H1 (cell line): ENCODE measurements at regions of chr19 and their contacts with region 1.

Region 1: GRCh38 chr19:7106711-7107685 is 37.5 kb downstream of the ZNF557 start:
- DNase-seq: no peak
- H3K4me3 ChIP-seq: no peak overlapping the region
- H3K27ac ChIP-seq: no peak overlapping the region
- H3K4me1 ChIP-seq: peaks cover 0 to 5% (median 0%) of the 10 kb centered on the region in 4 experiments; a peak in 4 of 7 replicates
- H3K27me3 ChIP-seq: 0 out of 7 replicates have a peak, but pooled peaks cover 0 to 2% (median 0%) of the 10 kb centered on the region in 4 experiments
- CTCF ChIP-seq: no peak
- EP300 ChIP-seq: no peak
- POLR2A ChIP-seq: no peak
- RAD21 ChIP-seq: no peak

Region 2: DNA sequence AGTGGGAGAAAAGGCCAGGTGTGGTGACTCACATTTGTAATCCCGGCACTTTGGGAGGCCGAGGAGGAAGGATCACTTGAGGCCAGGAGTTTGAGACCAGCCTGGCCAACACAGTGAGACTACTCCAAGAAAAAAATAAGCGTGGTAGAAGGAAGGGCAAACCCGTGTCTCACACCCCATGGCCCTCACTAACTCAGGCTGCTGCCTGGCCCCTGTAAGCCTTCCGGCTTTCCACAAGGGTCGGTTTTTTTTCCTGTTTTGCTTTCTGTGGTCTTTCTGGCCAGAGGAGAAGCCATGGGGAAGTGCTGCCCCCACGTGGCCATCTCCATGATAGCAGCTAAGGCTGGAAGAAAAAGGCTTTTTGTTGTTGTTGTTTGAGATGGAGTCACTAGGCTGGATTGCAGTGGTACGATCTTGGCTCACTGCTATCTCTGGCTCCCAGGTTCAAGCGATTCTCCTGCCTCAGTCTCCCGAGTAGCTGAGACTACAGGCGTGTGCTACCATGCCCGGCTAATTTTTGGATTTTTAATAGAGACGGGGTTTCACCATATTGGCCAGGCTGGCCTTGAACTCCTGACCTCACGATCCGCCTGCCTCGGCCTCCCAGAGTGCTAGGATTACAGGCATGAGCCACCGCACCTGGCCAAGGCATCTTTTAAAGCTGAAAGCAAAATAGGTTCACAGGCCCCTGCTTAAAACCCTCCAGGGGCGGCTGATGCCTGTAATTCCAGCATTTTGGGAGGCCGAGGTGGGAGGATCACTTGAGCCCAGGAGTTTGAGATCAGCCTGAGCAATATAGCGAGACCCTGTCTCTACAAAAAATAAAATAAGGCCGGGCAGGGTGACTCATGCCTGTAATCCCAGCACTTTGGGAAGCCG is 234.2 kb after region 1 on chr19:
- CTCF ChIA-PET with region 1: interaction called, 35 read pairs
- POLR2A ChIA-PET with region 1: no interaction called
- DNase-seq: peak; percentile 66 to 100
- H3K4me3 ChIP-seq: no peak overlapping the region
- H3K27ac ChIP-seq: no peak overlapping the region
- H3K4me1 ChIP-seq: no peaks in the 10 kb centered on the region
- H3K27me3 ChIP-seq: no peaks in the 10 kb centered on the region
- CTCF ChIP-seq: peak; percentile 73 to 97 (median 93)
- EP300 ChIP-seq: no peak
- POLR2A ChIP-seq: no peak
- RAD21 ChIP-seq: peak; percentile 99